ENCODE measurements at regions of chr12 and their contacts with region 1.

Region 1: GRCh38 chr12:94532490-94533422 is 73.1 kb upstream of the CEP83 start:
- DNase-seq: peak; percentile 77
- H3K4me3 ChIP-seq: no peak overlapping the region
- H3K27ac ChIP-seq: no peak overlapping the region
- H3K4me1 ChIP-seq: no peaks in the 10 kb centered on the region
- CTCF ChIP-seq: peak; percentile 91

Region 2: DNA sequence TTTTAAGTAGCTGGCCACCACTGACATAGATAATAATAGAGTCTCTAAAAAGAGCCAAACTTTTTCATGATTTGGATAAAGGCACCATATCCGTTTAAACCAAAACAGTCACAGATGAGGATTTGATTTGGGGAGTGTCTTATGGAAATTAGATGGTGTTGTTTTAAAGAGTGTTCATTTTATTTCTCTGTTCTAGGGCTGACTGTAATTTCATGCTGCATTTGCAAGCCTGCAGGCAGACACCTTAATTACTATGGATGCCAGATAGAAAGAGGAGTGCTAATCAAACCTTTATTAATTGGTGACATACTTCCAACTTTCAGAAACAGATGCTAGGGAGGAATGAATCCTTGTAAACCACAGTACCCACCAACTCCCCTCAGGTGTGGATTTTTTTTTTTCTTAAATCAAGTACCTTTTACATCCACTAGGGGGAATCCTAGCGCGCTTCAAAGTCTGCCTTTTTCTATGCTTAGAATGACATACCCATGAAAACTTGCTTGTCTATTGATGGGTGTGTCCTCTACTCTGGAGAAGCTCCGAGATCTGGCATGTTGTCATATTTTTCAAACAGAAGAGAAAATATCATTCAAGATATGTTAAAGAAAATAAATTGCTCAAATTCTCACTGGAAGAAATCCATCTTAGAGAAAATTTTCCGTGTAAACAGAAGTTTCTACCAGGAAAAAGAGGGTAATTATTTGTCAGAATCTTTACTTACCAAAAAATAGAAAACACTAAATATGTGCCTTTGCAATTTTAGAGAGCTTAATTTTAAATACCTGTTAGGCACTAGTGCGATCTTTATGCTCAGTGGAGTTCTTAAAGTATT is 398.6 kb before region 1 on chr12:
- CTCF ChIA-PET with region 1: interaction called, 3 read pairs
- POLR2A ChIA-PET with region 1: no interaction called
- intact Hi-C with region 1: loop called (anchors 1 kb)
- DNase-seq: peak; percentile 71
- H3K4me3 ChIP-seq: no peak overlapping the region
- H3K27ac ChIP-seq: no peak overlapping the region
- H3K4me1 ChIP-seq: no peaks in the 10 kb centered on the region
- CTCF ChIP-seq: peak; percentile 89

Region 3: DNA sequence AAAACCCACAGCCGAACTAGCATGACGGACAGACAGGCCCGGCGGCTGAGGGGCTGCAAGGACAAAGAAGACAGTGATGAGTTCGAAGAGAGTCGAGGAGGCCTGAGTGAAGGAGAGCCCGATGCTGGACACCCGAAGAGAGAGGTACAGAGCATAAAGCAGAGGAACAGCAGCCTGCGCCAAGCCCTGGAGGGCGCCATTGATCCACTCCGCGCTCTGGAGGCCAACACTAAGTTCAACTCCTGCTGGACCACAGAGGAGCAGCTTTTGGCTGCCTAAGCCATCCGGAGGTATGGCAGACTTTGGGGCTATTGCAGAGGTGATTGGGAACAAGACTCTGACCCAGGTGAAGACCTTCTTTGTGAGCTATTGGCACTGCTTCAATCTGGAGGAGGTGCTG is 392.2 kb before region 1 on chr12:
- CTCF ChIA-PET with region 1: interaction called, 3 read pairs
- POLR2A ChIA-PET with region 1: no interaction called
- intact Hi-C with region 1: loop called (anchors 1 kb)
- DNase-seq: peak; percentile 59
- H3K4me3 ChIP-seq: no peak overlapping the region
- H3K27ac ChIP-seq: no peak overlapping the region
- H3K4me1 ChIP-seq: no peaks in the 10 kb centered on the region
- CTCF ChIP-seq: peak; percentile 79

Region 4: GRCh38 chr12:94329362-94329761 is 203.4 kb before region 1 on chr12:
- CTCF ChIA-PET with region 1: no interaction called
- POLR2A ChIA-PET with region 1: no interaction called
- intact Hi-C with region 1: loop called (anchors 2 kb)
- DNase-seq: no peak
- H3K4me3 ChIP-seq: no peak overlapping the region
- H3K27ac ChIP-seq: no peak overlapping the region
- H3K4me1 ChIP-seq: no peaks in the 10 kb centered on the region
- CTCF ChIP-seq: peak; percentile 64

Region 5: GRCh38 chr12:94504386-94504785 is 28.4 kb before region 1 on chr12:
- CTCF ChIA-PET with region 1: no interaction called
- POLR2A ChIA-PET with region 1: no interaction called
- intact Hi-C with region 1: no loop called
- DNase-seq: no peak
- H3K4me3 ChIP-seq: no peak overlapping the region
- H3K27ac ChIP-seq: no peak overlapping the region
- H3K4me1 ChIP-seq: no peaks in the 10 kb centered on the region
- CTCF ChIP-seq: no peak

Region 6: DNA sequence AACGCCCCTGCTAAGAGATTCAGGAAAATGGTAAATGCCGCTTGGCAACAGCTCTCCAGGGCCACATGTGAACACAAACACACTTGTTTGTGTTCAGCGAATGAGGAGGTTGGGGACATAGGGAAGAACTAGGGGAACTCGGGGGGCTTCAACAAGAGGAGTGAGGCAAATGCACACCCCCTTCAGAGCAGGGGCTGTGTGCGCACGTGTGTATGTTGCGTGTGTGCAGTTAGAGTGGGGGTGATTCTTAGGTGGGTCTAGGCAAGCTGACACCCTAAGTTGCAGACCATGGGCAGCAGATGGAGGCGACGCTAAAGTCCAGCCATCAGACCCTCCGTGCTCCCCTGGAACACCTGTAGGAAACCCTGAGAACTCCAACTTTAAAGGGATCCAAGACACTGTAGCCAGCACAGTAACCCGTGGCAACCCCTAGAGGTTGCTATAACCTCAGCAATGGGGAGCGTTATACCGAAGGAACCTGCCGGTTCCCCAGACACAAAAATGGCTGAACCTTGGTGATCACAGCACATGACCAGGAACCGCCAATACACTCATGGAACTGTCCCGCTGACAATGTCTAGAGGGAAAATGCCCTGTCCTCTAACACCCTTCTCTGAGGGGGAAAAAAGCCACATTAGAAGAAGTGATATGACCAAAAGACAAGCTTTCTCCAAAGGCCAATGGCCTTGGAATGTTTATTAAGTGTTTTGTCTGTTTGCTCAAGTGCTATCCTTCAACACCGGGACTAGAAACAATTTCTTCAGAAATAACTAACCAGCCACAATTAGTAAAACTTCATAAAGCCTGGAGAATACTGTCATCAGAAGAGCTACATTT is 13.4 kb after region 1 on chr12:
- CTCF ChIA-PET with region 1: no interaction called
- POLR2A ChIA-PET with region 1: no interaction called
- intact Hi-C with region 1: no loop called
- DNase-seq: peak; percentile 43
- H3K4me3 ChIP-seq: no peak overlapping the region
- H3K27ac ChIP-seq: no peak overlapping the region
- H3K4me1 ChIP-seq: no peaks in the 10 kb centered on the region
- CTCF ChIP-seq: peak; percentile 72

Region 7: GRCh38 chr12:95336390-95337067 is 803.8 kb after region 1 on chr12:
- CTCF ChIA-PET with region 1: no interaction called
- POLR2A ChIA-PET with region 1: no interaction called
- intact Hi-C with region 1: no loop called
- DNase-seq: peak; percentile 89
- H3K4me3 ChIP-seq: peak overlapping the region; percentile 59
- H3K27ac ChIP-seq: peak overlapping the region; percentile 68
- H3K4me1 ChIP-seq: peaks cover 80% of the 10 kb centered on the region
- CTCF ChIP-seq: peak; percentile 98